ENCODE measurements at regions of chr4 and their contacts with region 1.

Region 1: GRCh38 chr4:10013722-10014121 is 7.6 kb downstream of the SLC2A9 start:
- DNase-seq: peak; percentile 77
- ATAC-seq: peak; percentile 60
- H3K4me3 Mint-ChIP-seq: no peak overlapping the region
- H3K27ac Mint-ChIP-seq: no peak overlapping the region
- H3K4me1 Mint-ChIP-seq: peaks cover 21% of the 10 kb centered on the region
- H3K27me3 Mint-ChIP-seq: no peaks in the 10 kb centered on the region
- CTCF ChIP-seq: peak; percentile 58

Region 2: GRCh38 chr4:9611101-9611500 is 402.6 kb before region 1 on chr4:
- CTCF ChIA-PET with region 1: no interaction called
- POLR2A ChIA-PET with region 1: no interaction called
- intact Hi-C with region 1: no loop called
- DNase-seq: no peak
- ATAC-seq: no peak
- H3K4me3 Mint-ChIP-seq: no peak overlapping the region
- H3K27ac Mint-ChIP-seq: no peak overlapping the region
- H3K4me1 Mint-ChIP-seq: peaks cover 19% of the 10 kb centered on the region
- H3K27me3 Mint-ChIP-seq: no peaks in the 10 kb centered on the region
- CTCF ChIP-seq: no peak

Region 3: GRCh38 chr4:9704551-9705332 is 309.0 kb before region 1 on chr4:
- CTCF ChIA-PET with region 1: interaction called, 65 read pairs
- POLR2A ChIA-PET with region 1: no interaction called
- intact Hi-C with region 1: loop called (anchors 5 kb)
- DNase-seq: no peak
- ATAC-seq: no peak
- H3K4me3 Mint-ChIP-seq: no peak overlapping the region
- H3K27ac Mint-ChIP-seq: no peak overlapping the region
- H3K4me1 Mint-ChIP-seq: peaks cover 10% of the 10 kb centered on the region
- H3K27me3 Mint-ChIP-seq: no peaks in the 10 kb centered on the region
- CTCF ChIP-seq: no peak

Region 4: DNA sequence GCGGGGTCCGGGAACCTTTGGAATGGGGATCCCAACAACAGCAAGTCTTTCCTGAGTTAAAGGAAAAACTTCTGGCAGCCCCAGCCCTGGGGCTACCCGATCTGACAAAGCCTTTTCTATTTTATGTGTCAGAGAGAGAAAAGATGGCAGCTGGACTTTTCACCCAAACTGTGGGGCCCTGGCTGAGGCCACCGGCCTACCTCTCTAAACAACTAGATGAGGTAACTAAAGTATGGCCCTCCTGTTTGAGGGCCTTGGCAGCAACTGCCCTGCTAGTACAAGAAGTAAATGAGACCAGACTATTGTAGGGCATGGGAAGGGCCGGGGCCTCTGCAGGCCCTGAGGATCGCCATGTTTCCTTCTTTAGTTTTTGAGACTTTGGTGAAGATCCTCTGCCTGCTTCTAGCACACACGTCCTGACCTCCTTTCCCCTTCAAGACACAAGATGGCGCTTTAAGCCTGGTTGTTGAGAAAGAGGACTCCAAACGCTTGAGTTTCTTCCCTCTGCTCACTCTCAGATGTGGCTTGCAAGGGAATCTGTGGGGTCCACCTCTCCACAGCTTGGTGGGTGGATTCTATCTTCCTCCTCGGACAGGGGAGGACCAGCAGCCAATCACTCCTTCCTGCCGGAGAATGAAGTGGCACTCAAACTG is 250.8 kb before region 1 on chr4:
- CTCF ChIA-PET with region 1: interaction called, 55 read pairs
- POLR2A ChIA-PET with region 1: no interaction called
- intact Hi-C with region 1: loop called (anchors 2 kb)
- DNase-seq: peak; percentile 62
- ATAC-seq: peak; percentile 24
- H3K4me3 Mint-ChIP-seq: no peak overlapping the region
- H3K27ac Mint-ChIP-seq: no peak overlapping the region
- H3K4me1 Mint-ChIP-seq: no peaks in the 10 kb centered on the region
- H3K27me3 Mint-ChIP-seq: peaks cover 16% of the 10 kb centered on the region
- CTCF ChIP-seq: peak; percentile 47

Region 5: GRCh38 chr4:9904976-9905587 is 108.6 kb before region 1 on chr4:
- CTCF ChIA-PET with region 1: interaction called, 20 read pairs
- POLR2A ChIA-PET with region 1: no interaction called
- intact Hi-C with region 1: no loop called
- DNase-seq: peak; percentile 28
- ATAC-seq: peak; percentile 71
- H3K4me3 Mint-ChIP-seq: no peak overlapping the region
- H3K27ac Mint-ChIP-seq: no peak overlapping the region
- H3K4me1 Mint-ChIP-seq: peaks cover 6% of the 10 kb centered on the region
- H3K27me3 Mint-ChIP-seq: no peaks in the 10 kb centered on the region
- CTCF ChIP-seq: no peak

Region 6: DNA sequence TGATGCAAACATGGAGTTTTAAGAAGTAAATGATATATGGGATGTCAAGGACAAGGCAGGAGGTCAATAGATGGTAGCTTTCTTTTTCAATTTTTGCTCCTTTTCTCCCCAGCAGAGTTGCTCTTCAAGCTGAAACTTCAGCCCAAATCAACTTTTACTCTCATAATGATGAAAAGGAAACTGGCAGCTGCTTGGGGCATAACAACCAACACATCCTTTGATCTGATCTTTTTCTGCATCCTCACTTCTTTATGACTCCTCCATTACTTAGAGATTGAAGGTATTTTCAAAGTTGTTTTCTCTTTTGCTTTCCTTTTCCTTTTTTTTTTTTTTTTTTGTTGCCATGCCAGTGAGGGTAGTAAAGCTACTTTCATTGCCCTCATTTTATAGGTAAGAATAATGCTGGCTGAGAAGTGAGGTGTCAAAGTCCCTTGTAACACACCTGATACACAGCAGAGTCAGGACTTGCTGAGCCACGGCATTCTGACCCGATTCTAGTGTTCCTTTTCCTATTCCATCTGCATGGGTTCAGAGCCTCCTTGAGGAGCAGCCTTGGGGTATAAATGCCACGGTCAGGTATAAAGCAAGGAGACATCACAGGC is 19.4 kb before region 1 on chr4:
- CTCF ChIA-PET with region 1: interaction called, 21 read pairs
- POLR2A ChIA-PET with region 1: no interaction called
- intact Hi-C with region 1: no loop called
- DNase-seq: peak; percentile 29
- ATAC-seq: peak; percentile 88
- H3K4me3 Mint-ChIP-seq: no peak overlapping the region
- H3K27ac Mint-ChIP-seq: peak overlapping the region; percentile 85
- H3K4me1 Mint-ChIP-seq: peaks cover 27% of the 10 kb centered on the region
- H3K27me3 Mint-ChIP-seq: no peaks in the 10 kb centered on the region
- CTCF ChIP-seq: no peak

Region 7: DNA sequence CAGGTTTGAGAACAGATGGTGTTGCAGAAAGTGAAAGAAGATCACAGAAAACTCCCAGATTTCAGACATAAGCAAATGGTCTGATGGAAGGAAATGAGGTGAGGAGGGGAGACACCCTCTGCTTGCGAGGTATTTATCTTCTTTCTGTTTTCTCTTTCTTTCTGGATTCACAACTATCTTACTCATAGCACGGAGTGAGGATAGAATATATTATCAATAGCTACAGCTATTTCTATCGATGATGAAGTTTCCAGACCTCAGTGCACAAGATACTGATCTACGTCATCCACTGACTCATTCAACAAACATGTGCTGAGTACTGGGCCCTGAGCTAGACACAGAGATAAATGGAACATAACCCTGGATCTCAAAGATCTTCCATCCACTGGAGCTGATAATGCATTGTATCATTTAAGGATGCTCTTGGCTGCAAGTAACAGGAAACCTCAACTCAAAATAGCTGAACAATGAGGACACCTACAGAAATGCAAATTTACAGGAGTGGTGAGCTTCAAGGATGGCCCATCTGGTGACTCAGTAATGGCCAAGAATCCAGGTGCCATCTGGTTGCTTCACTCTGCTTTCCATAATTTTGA is 13.7 kb before region 1 on chr4:
- CTCF ChIA-PET with region 1: interaction called, 21 read pairs
- POLR2A ChIA-PET with region 1: interaction called, 3 read pairs
- intact Hi-C with region 1: no loop called
- DNase-seq: no peak
- ATAC-seq: peak; percentile 55
- H3K4me3 Mint-ChIP-seq: no peak overlapping the region
- H3K27ac Mint-ChIP-seq: peak overlapping the region; percentile 34
- H3K4me1 Mint-ChIP-seq: peaks cover 36% of the 10 kb centered on the region
- H3K27me3 Mint-ChIP-seq: no peaks in the 10 kb centered on the region
- CTCF ChIP-seq: no peak

Region 8: GRCh38 chr4:10074767-10075105 is 61.0 kb after region 1 on chr4:
- CTCF ChIA-PET with region 1: no interaction called
- POLR2A ChIA-PET with region 1: no interaction called
- intact Hi-C with region 1: no loop called
- DNase-seq: peak; percentile 24
- ATAC-seq: peak; percentile 54
- H3K4me3 Mint-ChIP-seq: no peak overlapping the region
- H3K27ac Mint-ChIP-seq: peak overlapping the region; percentile 55
- H3K4me1 Mint-ChIP-seq: no peaks in the 10 kb centered on the region
- H3K27me3 Mint-ChIP-seq: no peaks in the 10 kb centered on the region
- CTCF ChIP-seq: peak; percentile 51

Measured in activated CD8-positive, alpha-beta T cell treated with anti-CD3 and anti-CD28 coated beads for 36 hours (primary cell).